Transverse colon (tissue), 4 donors: ENCODE measurements at regions of chr16 and their contacts with region 1.

Region 1: DNA sequence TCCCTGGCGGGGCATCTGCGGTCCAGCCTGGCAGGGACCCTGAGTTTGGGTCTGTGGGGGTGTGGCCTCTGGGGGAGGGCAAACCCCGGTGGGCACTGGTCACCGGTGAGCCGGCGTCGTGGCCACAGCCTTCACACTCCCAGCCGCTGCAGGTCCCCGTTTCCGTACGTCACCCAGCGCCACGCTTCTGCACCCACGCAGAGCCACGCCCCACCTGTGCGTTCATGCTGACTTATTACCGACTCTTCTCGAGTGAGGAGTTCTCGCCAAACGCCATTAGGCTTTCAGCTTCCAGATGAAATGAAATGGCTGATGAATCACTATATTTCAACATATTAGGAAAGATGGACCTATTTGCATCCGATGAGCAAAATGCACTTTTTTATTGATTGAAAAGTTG is 8.8 kb upstream of the SSTR5 start:
- DNase-seq: no peak
- H3K4me3 ChIP-seq: no peak overlapping the region
- H3K27ac ChIP-seq: no peak overlapping the region
- H3K4me1 ChIP-seq: no peaks in the 10 kb centered on the region
- H3K27me3 ChIP-seq: peaks cover 47% of the 10 kb centered on the region
- CTCF ChIP-seq: no peak
- EP300 ChIP-seq: no peak
- POLR2A ChIP-seq: no peak

Region 2: DNA sequence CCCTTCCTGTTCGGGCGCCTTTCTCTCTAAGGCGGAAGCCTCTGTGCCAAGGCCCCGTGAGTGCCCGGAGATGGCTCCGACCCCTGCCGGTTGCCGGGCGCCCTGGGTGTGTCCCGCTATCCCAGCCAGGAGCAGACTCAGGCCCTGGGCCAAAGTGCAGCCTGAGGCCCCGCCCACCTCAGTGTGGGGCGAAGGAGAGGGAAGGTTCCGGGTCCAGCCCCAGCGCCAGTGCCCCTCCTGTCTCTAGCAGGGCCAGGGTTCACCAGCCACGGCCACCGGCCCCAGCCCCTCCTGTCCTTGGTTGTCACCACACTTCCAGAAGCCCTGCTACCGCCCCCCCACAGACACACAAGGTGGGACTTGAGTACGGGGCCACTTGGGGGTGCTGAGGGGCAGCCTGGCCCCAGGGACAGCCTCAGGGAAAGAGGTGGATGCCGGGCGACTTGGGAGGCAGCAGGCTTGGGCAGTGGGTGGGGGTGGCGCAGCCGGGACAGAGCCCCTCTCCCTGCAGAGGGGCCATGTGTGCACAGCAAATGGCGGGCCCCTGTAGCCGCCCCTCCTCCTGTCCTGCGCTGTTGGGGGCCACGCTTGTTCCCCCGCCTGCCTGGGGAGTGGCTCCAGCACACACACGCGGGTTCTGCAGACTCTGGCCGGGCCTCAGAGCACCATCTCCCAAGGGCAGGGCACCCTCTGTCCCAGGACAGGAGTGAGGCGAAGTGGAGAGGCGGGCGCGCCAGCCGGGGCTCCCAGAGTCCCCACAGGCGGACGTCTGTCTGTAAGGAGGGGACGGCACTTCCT is 26.3 kb after region 1 on chr16:
- in situ Hi-C with region 1: no loop called
- intact Hi-C with region 1: loop called (anchors 1 kb)
- DNase-seq: peak; percentile 93
- H3K4me3 ChIP-seq: peak overlapping the region in 3 of 4 donors; percentile 26 to 43 (median 34)
- H3K27ac ChIP-seq: peak overlapping the region; percentile 71 to 76 (median 73)
- H3K4me1 ChIP-seq: peaks cover 10 to 29% (median 16%) of the 10 kb centered on the region in 4 donors
- H3K27me3 ChIP-seq: peaks cover 43% of the 10 kb centered on the region
- CTCF ChIP-seq: peak in 3 of 5 experiments; percentile 30 to 75 (median 61)
- EP300 ChIP-seq: no peak
- POLR2A ChIP-seq: peak; percentile 88